ENCODE measurements at regions of chr19 and their contacts with region 1.

Region 1: GRCh38 chr19:14556662-14557188 is 15.1 kb downstream of the NDUFB7 start:
- DNase-seq: peak; percentile 60
- H3K4me3 Mint-ChIP-seq: no peak overlapping the region
- H3K27ac Mint-ChIP-seq: peak overlapping the region; percentile 34
- H3K4me1 Mint-ChIP-seq: peaks cover 11% of the 10 kb centered on the region
- H3K27me3 Mint-ChIP-seq: no peaks in the 10 kb centered on the region

Region 2: GRCh38 chr19:14689598-14690503 is 133.1 kb after region 1 on chr19 and contains the start of gene ZNF333:
- intact Hi-C with region 1: loop called (anchors 5 kb)
- DNase-seq: peak; percentile 94
- H3K4me3 Mint-ChIP-seq: peak within 1 kb of the TSS; percentile 93
- H3K27ac Mint-ChIP-seq: peak within 1 kb of the TSS; percentile 99
- H3K4me1 Mint-ChIP-seq: peaks cover 16% of the 10 kb centered on the region
- H3K27me3 Mint-ChIP-seq: peaks cover 3% of the 10 kb centered on the region
- total RNA-seq, gene ZNF333: 10.0 and 11.1 TPM in 2 replicates